ENCODE measurements at regions of chr4 and their contacts with region 1.

Region 1: GRCh38 chr4:37452952-37453280 is 208.4 kb downstream of the NWD2 start:
- DNase-seq: peak; percentile 67
- H3K4me3 Mint-ChIP-seq: peak overlapping the region; percentile 83
- H3K27ac Mint-ChIP-seq: peak overlapping the region; percentile 42
- H3K4me1 Mint-ChIP-seq: peaks cover 9% of the 10 kb centered on the region
- H3K27me3 Mint-ChIP-seq: no peaks in the 10 kb centered on the region
- CTCF ChIP-seq: no peak

Region 2: DNA sequence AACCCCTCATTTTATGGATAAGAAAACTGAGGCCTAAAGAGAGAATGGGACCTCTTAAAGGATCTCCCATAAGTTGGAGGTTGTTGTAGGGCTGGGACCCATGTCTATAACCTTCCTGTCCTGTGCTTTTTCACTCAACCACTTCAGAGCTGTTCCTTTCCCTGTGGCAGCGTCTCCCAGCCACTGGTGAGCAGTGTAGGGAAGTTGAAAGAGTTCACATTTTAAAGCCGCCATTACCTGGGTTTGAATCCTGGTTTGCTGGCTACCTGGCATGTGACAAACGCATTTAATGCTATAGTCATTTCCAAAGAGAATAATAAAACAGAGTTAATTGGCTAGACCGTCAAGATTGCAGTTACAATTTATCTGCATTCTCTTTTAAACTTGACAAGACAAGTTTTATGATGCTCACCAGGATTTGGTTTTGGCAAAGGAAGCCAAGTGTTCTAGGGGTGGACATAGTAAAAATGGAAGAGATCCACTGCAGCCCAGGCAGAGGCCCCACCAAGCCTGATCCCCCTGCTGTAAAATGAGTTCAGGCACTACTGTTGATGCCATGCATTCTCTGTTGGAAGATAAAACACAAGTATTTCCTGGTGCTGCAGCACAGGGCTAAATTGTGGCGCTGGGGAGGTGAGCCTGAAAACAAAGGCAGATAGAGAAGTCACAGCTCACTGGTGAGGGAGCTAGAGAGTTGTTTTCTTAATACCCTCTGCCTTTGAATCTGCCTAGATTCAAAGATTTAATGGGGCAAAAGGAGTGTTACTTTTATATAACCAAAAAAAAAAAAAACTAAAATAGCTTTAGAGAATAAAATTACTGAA is 10.3 kb after region 1 on chr4:
- CTCF ChIA-PET with region 1: interaction called, 10 read pairs
- intact Hi-C with region 1: loop called (anchors 1 kb)
- DNase-seq: peak; percentile 39
- H3K4me3 Mint-ChIP-seq: peak overlapping the region; percentile 78
- H3K27ac Mint-ChIP-seq: peak overlapping the region; percentile 99
- H3K4me1 Mint-ChIP-seq: peaks cover 48% of the 10 kb centered on the region
- H3K27me3 Mint-ChIP-seq: no peaks in the 10 kb centered on the region
- CTCF ChIP-seq: no peak

Region 3: GRCh38 chr4:37490391-37491347 is 37.8 kb after region 1 on chr4:
- CTCF ChIA-PET with region 1: no interaction called
- intact Hi-C with region 1: loop called (anchors 5 kb)
- DNase-seq: peak; percentile 24
- H3K4me3 Mint-ChIP-seq: peak overlapping the region; percentile 62
- H3K27ac Mint-ChIP-seq: peak overlapping the region; percentile 96
- H3K4me1 Mint-ChIP-seq: peaks cover 46% of the 10 kb centered on the region
- H3K27me3 Mint-ChIP-seq: no peaks in the 10 kb centered on the region
- CTCF ChIP-seq: no peak

Region 4: GRCh38 chr4:37561803-37562207 is 108.9 kb after region 1 on chr4:
- CTCF ChIA-PET with region 1: interaction called, 15 read pairs
- intact Hi-C with region 1: loop called (anchors 1 kb)
- DNase-seq: peak; percentile 73
- H3K4me3 Mint-ChIP-seq: no peak overlapping the region
- H3K27ac Mint-ChIP-seq: peak overlapping the region; percentile 73
- H3K4me1 Mint-ChIP-seq: peaks cover 42% of the 10 kb centered on the region
- H3K27me3 Mint-ChIP-seq: no peaks in the 10 kb centered on the region
- CTCF ChIP-seq: no peak

Region 5: DNA sequence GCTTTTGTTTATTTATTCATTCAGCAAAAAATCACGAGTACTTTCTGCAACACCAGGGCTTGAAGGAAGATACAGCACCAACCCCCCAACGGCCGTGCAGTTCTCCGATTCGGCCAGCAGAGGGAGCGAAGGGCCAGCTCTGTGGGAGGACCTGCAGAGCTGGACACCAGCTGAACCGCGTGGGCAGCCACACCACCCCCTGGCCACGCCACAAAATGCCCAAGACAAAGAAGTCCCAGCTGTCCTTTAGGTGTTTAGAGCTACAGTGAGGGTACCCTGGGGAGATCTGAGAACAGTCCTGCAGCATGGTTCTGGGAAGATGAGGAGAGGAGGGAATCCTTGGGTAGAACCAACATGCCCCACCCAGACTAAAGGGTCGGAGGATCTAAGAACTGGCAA is 150.2 kb after region 1 on chr4:
- CTCF ChIA-PET with region 1: interaction called, 18 read pairs
- intact Hi-C with region 1: no loop called
- DNase-seq: peak; percentile 82
- H3K4me3 Mint-ChIP-seq: no peak overlapping the region
- H3K27ac Mint-ChIP-seq: peak overlapping the region; percentile 40
- H3K4me1 Mint-ChIP-seq: peaks cover 54% of the 10 kb centered on the region
- H3K27me3 Mint-ChIP-seq: no peaks in the 10 kb centered on the region
- CTCF ChIP-seq: peak; percentile 91

Region 6: DNA sequence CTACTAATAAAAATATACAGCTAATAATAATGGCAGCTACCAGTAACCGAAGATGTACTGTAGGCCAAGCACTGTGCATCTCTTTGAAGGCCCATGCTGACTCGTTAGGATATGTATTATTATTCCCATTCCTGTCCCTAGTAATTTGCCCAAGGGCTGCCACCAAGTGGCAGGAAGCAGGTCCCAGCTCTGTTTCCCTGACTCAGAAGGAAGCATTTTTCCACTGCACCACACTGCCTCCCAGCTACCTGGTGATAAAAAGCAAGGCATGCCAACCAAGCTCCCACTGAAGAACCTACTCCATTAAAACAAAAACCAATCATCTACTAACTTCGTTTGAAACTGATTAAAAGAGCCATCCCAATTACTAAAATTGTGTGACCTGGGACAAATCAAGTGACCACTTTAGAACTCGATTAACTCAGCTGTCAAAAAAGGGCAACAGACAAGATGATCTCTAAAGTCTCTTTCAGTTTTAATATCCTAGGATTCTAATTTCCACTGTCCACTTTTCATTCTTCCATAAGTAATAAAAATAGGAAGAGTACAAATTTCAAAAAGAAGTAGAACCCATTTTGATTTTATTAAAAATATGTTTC is 349.3 kb after region 1 on chr4:
- CTCF ChIA-PET with region 1: interaction called, 12 read pairs
- intact Hi-C with region 1: loop called (anchors 5 kb)
- DNase-seq: peak; percentile 70
- H3K4me3 Mint-ChIP-seq: no peak overlapping the region
- H3K27ac Mint-ChIP-seq: no peak overlapping the region
- H3K4me1 Mint-ChIP-seq: peaks cover 6% of the 10 kb centered on the region
- H3K27me3 Mint-ChIP-seq: no peaks in the 10 kb centered on the region
- CTCF ChIP-seq: peak; percentile 29